ENCODE measurements at regions of chr12 and their contacts with region 1.

Region 1: GRCh38 chr12:124992874-124993625 is 395 bp upstream of the BRI3BP start:
- DNase-seq: peak; percentile 92
- ATAC-seq: peak; percentile 34
- H3K4me3 ChIP-seq: peak overlapping the region; percentile 58 to 98 (median 76)
- H3K4me3 Mint-ChIP-seq: peak overlapping the region; percentile 90
- H3K27ac ChIP-seq: peak overlapping the region; percentile 35 to 62
- H3K27ac Mint-ChIP-seq: peak overlapping the region; percentile 86
- H3K4me1 ChIP-seq: peaks cover 34 to 54% of the 10 kb centered on the region in 2 donors
- H3K4me1 Mint-ChIP-seq: peaks cover 43% of the 10 kb centered on the region
- H3K27me3 ChIP-seq: no peaks in the 10 kb centered on the region
- H3K27me3 Mint-ChIP-seq: no peaks in the 10 kb centered on the region
- CTCF ChIP-seq: peak; percentile 80

Region 2: DNA sequence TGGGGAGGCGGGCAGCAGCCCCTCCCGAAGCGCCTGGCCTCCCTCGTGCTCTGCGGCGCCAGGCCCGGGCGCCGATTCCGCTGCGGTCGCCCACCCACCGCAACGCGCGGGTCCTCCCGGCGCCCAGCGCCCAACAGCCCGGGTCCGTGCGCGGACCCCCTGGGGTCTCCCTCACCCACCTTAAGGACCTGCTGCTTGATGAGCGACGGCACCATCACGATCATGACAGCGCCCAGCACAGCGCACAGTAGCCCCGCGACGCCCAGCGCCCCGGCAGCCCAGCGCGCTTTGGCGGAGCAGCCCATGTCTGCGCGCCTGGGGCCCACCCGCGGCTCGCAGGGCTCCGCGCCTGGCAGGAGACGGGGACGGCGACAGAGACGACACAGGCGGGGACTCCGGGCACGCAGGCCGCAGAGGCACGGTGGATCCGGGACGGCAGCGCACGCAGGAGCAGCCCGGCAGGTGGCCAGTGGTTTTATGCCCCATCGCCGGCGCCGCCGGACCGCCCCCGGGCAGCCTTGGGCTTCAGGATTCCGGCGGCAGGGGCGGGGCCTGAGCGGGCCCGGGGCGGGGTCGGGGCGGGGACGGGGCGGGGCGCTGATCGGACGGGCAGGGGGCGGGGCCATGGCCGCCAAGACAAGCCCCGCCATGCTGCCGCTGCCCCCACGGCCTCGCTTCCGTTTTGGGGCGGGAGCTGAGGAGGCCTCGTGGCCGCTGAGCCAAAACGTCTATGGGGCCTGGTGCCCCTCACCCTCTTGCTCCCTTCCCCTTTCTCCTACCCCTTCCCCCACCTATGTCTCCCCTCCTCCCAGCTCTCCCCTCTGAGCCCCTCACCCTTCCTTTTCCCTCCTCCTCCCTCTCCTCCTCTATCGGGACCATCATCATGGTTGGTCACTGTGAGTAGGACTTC is 129.4 kb before region 1 on chr12 and contains the start of gene SCARB1:
- CTCF ChIA-PET with region 1: no interaction called
- POLR2A ChIA-PET with region 1: no interaction called
- intact Hi-C with region 1: loop called (anchors 5 kb)
- DNase-seq: peak; percentile 87
- ATAC-seq: peak; percentile 89
- H3K4me3 ChIP-seq: peak within 1 kb of the TSS; percentile 19 to 78 (median 62)
- H3K4me3 Mint-ChIP-seq: peak within 1 kb of the TSS; percentile 87
- H3K27ac ChIP-seq: peak within 1 kb of the TSS; percentile 63 to 80
- H3K27ac Mint-ChIP-seq: peak within 1 kb of the TSS; percentile 87
- H3K4me1 ChIP-seq: peaks cover 18 to 31% of the 10 kb centered on the region in 2 donors
- H3K4me1 Mint-ChIP-seq: peaks cover 42% of the 10 kb centered on the region
- H3K27me3 ChIP-seq: no peaks in the 10 kb centered on the region
- H3K27me3 Mint-ChIP-seq: no peaks in the 10 kb centered on the region
- CTCF ChIP-seq: no peak
- total RNA-seq, gene SCARB1: 25.8 and 26.8 TPM in 2 replicates

Region 3: GRCh38 chr12:124940549-124941527 is 52.2 kb before region 1 on chr12:
- CTCF ChIA-PET with region 1: interaction called, 6 read pairs
- POLR2A ChIA-PET with region 1: interaction called, 3 read pairs
- intact Hi-C with region 1: loop called (anchors 1 kb)
- DNase-seq: peak; percentile 88
- ATAC-seq: peak; percentile 57
- H3K4me3 ChIP-seq: peak overlapping the region in 4 of 5 experiments; percentile 58 to 80 (median 75)
- H3K4me3 Mint-ChIP-seq: no peak overlapping the region
- H3K27ac ChIP-seq: peak overlapping the region; percentile 44 to 61
- H3K27ac Mint-ChIP-seq: no peak overlapping the region
- H3K4me1 ChIP-seq: peaks cover 27 to 29% of the 10 kb centered on the region in 2 donors
- H3K4me1 Mint-ChIP-seq: peaks cover 14% of the 10 kb centered on the region
- H3K27me3 ChIP-seq: no peaks in the 10 kb centered on the region
- H3K27me3 Mint-ChIP-seq: no peaks in the 10 kb centered on the region
- CTCF ChIP-seq: peak; percentile 87

Region 4: GRCh38 chr12:125049093-125049458 is 56.0 kb after region 1 on chr12:
- CTCF ChIA-PET with region 1: interaction called, 8 read pairs
- POLR2A ChIA-PET with region 1: interaction called, 6 read pairs
- intact Hi-C with region 1: loop called (anchors 1 kb)
- DNase-seq: no peak
- ATAC-seq: no peak
- H3K4me3 ChIP-seq: peak overlapping the region; percentile 40 to 82 (median 64)
- H3K4me3 Mint-ChIP-seq: peak overlapping the region; percentile 94
- H3K27ac ChIP-seq: peak overlapping the region in 1 of 2 donors; percentile 26
- H3K27ac Mint-ChIP-seq: peak overlapping the region; percentile 90
- H3K4me1 ChIP-seq: peaks cover 0 to 8% of the 10 kb centered on the region in 2 donors
- H3K4me1 Mint-ChIP-seq: peaks cover 7% of the 10 kb centered on the region
- H3K27me3 ChIP-seq: no peaks in the 10 kb centered on the region
- H3K27me3 Mint-ChIP-seq: no peaks in the 10 kb centered on the region
- CTCF ChIP-seq: no peak

Measured in B cell (primary cell).